Gastrocnemius medialis (tissue), 4 donors: ENCODE measurements at regions of chr4 and their contacts with region 1.

Region 1: GRCh38 chr4:71713611-71714203 is 70.2 kb downstream of the GC start:
- DNase-seq: no peak
- ATAC-seq: no peak
- H3K4me3 ChIP-seq: no peak overlapping the region
- H3K27ac ChIP-seq: no peak overlapping the region
- H3K4me1 ChIP-seq: no peaks in the 10 kb centered on the region
- H3K27me3 ChIP-seq: no peaks in the 10 kb centered on the region
- CTCF ChIP-seq: peak in 4 of 5 experiments; percentile 29 to 55 (median 40)
- POLR2A ChIP-seq: no peak

Region 2: DNA sequence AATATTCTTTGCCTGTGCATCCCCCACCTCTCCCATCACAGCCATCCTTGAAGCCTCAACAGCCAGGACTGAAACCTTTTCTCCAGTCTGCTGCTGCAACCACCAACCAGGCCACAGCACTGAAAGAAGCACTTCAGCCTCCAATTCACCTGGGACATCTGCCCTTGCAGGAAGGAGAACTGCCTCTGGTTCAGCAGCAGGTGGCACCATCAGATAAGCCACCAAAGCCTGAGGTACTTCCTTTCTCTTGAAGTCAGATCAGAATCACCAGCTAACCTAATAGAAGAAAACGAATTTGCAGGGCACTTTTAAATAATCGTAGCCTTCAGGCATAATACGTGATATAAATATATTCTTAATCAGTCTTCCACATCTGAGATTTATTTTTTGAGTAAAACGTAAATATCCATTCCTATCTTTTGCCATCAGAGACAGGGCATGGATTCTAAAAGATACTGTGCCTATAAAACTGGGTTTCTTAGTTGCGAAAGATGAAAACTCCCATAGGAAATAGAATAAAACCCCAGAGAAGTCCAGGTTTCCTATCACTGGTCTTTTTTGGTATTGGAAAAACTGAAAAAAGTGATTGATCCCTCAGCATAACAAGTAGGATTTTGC is 1112.2 kb before region 1 on chr4:
- in situ Hi-C with region 1: loop called in 2 of 4 experiments (anchors 25 kb)
- intact Hi-C with region 1: no loop called
- DNase-seq: peak; percentile 18 to 46
- ATAC-seq: peak; percentile 80 to 90
- H3K4me3 ChIP-seq: no peak overlapping the region
- H3K27ac ChIP-seq: no peak overlapping the region
- H3K4me1 ChIP-seq: no peaks in the 10 kb centered on the region
- H3K27me3 ChIP-seq: no peaks in the 10 kb centered on the region
- CTCF ChIP-seq: peak; percentile 57 to 88 (median 71)
- POLR2A ChIP-seq: no peak

Region 3: DNA sequence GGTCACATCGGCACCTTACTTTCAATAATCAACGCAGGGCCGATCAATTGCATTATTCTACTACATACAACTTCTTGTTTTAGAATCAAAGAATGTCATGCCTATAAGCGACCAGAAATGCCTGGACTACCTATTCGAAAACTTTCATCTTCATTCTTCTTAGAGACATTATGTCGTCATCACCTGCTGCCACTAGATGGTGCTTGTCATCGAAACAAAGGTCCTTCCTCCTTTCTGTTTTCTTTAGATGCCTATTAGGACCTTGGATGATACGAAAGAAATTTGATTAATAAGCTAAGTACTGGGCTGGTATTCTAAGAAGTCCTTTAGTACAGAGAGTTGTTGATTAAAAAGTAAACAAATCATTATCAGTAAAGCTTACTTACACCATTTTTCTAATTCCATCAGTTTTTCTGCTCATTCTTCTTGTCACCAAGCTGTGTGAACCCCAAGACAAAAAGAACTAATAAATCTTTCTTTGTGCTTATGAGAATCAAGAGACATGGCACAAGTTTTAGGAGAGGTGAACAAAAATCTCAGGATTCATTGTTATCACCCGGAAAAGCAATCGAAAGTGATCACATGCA is 529.4 kb before region 1 on chr4:
- in situ Hi-C with region 1: loop called in 1 of 4 experiments (anchors 10 kb)
- intact Hi-C with region 1: loop called (anchors 5 kb)
- DNase-seq: peak in 1 of 2 donors; percentile 17
- ATAC-seq: peak; percentile 21 to 40
- H3K4me3 ChIP-seq: no peak overlapping the region
- H3K27ac ChIP-seq: no peak overlapping the region
- H3K4me1 ChIP-seq: peaks cover 8 to 10% of the 10 kb centered on the region in 2 donors
- H3K27me3 ChIP-seq: no peaks in the 10 kb centered on the region
- CTCF ChIP-seq: peak; percentile 22 to 65 (median 23)
- POLR2A ChIP-seq: no peak

Region 4: DNA sequence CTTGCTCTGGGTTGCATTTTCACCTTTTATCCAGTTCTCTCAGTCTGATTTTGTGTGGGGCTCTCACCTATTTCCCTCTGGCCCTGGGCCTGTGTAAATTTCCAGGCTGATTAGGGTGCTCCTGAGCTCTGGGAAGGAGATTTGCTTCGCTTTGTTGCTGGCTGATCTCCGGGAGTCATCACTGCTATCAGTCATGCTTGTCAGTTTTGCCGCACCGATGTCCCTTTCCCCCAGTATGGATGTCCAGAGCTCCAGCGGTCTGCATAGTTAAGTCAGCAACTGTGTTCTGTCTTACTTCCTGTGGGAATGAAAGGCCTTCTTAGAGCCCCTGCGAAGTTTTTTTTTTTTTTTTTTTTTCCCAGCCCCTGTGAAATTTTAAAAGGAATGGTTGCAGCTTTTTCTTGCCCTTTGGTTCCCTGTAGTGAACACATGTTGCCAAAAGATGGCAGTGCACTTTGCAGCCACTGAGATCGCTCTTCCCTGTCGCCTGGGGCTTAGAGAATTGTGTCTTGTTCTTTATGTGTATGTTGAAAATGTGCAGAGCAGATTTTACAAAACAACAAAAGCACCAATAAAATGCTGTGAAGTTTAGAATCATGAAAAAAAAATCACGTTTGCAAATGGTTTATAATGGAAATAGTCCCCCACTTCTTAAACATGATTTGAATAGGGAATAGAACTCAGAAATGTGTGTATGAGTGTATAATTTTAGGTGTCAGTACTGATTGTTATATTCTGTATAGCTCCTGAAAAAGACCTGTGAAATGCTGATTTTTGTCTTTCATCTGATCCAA is 484.0 kb before region 1 on chr4:
- in situ Hi-C with region 1: no loop called
- intact Hi-C with region 1: loop called (anchors 5 kb)
- DNase-seq: no peak
- ATAC-seq: peak; percentile 48 to 76
- H3K4me3 ChIP-seq: peak overlapping the region in 1 of 4 donors; percentile 28
- H3K27ac ChIP-seq: peak overlapping the region in 2 of 4 donors; percentile 72 to 76
- H3K4me1 ChIP-seq: peaks cover 21 to 29% of the 10 kb centered on the region in 2 donors
- H3K27me3 ChIP-seq: no peaks in the 10 kb centered on the region
- CTCF ChIP-seq: peak; percentile 44 to 76 (median 56)
- POLR2A ChIP-seq: no peak

Region 5: DNA sequence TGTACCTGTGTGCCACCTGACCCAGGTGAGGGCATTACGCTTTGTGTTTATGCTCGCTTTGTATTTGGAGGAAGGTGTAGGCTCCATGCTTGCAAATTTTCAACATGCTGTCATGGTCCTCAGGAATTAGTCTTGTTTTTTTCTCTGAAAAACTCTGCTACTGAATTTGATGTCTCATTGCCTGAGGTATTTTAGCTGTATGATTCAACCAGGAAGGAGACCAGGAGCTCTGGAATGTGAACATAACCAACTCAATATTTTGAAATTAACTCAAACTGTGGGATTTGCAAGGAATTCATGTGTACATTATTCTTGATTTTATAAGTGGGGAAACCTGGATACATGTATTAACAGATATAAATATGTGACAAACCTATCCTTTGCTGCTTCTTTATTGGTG is 240.8 kb before region 1 on chr4:
- in situ Hi-C with region 1: no loop called
- intact Hi-C with region 1: no loop called
- DNase-seq: no peak
- ATAC-seq: no peak
- H3K4me3 ChIP-seq: no peak overlapping the region
- H3K27ac ChIP-seq: no peak overlapping the region
- H3K4me1 ChIP-seq: no peaks in the 10 kb centered on the region
- H3K27me3 ChIP-seq: no peaks in the 10 kb centered on the region
- CTCF ChIP-seq: no peak
- POLR2A ChIP-seq: no peak

Region 6: DNA sequence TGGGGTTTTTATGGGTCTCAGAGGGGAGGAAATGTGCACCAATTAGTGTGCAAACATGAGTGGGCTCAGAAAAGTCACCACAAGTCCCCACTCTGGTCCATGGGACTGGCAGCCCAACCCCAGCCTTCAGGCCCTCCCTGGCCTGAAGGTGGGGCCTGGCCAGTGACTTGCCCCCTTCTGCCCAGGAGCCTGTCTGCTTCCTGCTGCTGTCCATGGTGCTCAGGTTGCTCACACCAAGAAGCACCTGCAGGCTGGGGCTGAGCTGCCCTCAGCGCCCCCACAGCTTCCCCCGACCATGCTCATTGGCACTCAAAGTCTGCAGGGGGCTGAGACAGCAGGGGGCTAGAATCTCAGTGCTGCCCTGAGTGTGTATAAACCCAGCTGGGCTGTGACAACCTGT is 100.7 kb after region 1 on chr4:
- in situ Hi-C with region 1: loop called in 1 of 4 experiments (anchors 25 kb)
- intact Hi-C with region 1: no loop called
- DNase-seq: no peak
- ATAC-seq: no peak
- H3K4me3 ChIP-seq: no peak overlapping the region
- H3K27ac ChIP-seq: no peak overlapping the region
- H3K4me1 ChIP-seq: no peaks in the 10 kb centered on the region
- H3K27me3 ChIP-seq: no peaks in the 10 kb centered on the region
- CTCF ChIP-seq: no peak
- POLR2A ChIP-seq: no peak

Region 7: DNA sequence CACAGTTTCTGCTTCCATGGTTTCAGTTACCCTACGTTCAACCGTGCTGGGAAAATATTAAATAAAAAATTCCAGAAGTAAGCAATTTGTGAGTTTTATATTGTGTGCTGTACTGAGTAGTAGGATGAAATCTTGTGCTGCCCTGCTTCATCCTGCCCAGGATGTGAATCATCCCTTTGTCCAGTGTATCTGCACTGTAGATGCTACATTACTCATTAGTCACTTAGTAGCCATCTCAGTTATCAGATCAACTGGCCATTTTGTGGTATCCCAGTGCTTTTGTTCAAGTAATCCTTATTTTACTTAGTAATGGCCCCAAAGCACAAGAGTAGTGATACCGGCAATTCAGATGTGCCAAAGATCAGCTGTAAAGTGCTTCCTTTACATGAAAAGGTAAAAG is 1257.9 kb after region 1 on chr4:
- in situ Hi-C with region 1: no loop called
- intact Hi-C with region 1: no loop called
- DNase-seq: no peak
- ATAC-seq: no peak
- H3K4me3 ChIP-seq: no peak overlapping the region
- H3K27ac ChIP-seq: no peak overlapping the region
- H3K4me1 ChIP-seq: no peaks in the 10 kb centered on the region
- H3K27me3 ChIP-seq: no peaks in the 10 kb centered on the region
- CTCF ChIP-seq: no peak
- POLR2A ChIP-seq: no peak